Activated T-helper 2 cell treated with anti-CD3 and anti-CD28 coated beads, Interferon-gamma antibody, Interleukin-2, Interleukin-4, amounts not matched to agents 10 μg/mL and 5 μg/mL and 100 μg/mL, durations not matched to agents 14 hours and 24 hours and 36 hours (primary cell): ENCODE measurements at regions of chr19 and their contacts with region 1.

Region 1: GRCh38 chr19:8252922-8253589 is 43.9 kb downstream of the CERS4 start:
- DNase-seq: peak; percentile 73
- H3K4me3 Mint-ChIP-seq: no peak overlapping the region
- H3K27ac Mint-ChIP-seq: no peak overlapping the region
- H3K4me1 Mint-ChIP-seq: peaks cover 3% of the 10 kb centered on the region
- H3K27me3 Mint-ChIP-seq: no peaks in the 10 kb centered on the region

Region 2: GRCh38 chr19:6811906-6812305 is 1441.2 kb before region 1 on chr19:
- intact Hi-C with region 1: no loop called
- DNase-seq: no peak
- H3K4me3 Mint-ChIP-seq: no peak overlapping the region
- H3K27ac Mint-ChIP-seq: no peak overlapping the region
- H3K4me1 Mint-ChIP-seq: peaks cover 37% of the 10 kb centered on the region
- H3K27me3 Mint-ChIP-seq: no peaks in the 10 kb centered on the region

Region 3: GRCh38 chr19:7943444-7944176 is 309.4 kb before region 1 on chr19 and contains the start of gene TIMM44:
- intact Hi-C with region 1: loop called (anchors 10 kb)
- DNase-seq: peak; percentile 99
- H3K4me3 Mint-ChIP-seq: peak within 1 kb of the TSS; percentile 84
- H3K27ac Mint-ChIP-seq: peak within 1 kb of the TSS; percentile 93
- H3K4me1 Mint-ChIP-seq: peaks cover 15% of the 10 kb centered on the region
- H3K27me3 Mint-ChIP-seq: no peaks in the 10 kb centered on the region
- total RNA-seq, gene TIMM44: 79.2 and 90.2 TPM in 2 replicates

Region 4: GRCh38 chr19:8158411-8159074 is 94.5 kb before region 1 on chr19:
- intact Hi-C with region 1: loop called (anchors 1 kb)
- DNase-seq: peak; percentile 36
- H3K4me3 Mint-ChIP-seq: no peak overlapping the region
- H3K27ac Mint-ChIP-seq: no peak overlapping the region
- H3K4me1 Mint-ChIP-seq: peaks cover 9% of the 10 kb centered on the region
- H3K27me3 Mint-ChIP-seq: peaks cover 8% of the 10 kb centered on the region

Region 5: DNA sequence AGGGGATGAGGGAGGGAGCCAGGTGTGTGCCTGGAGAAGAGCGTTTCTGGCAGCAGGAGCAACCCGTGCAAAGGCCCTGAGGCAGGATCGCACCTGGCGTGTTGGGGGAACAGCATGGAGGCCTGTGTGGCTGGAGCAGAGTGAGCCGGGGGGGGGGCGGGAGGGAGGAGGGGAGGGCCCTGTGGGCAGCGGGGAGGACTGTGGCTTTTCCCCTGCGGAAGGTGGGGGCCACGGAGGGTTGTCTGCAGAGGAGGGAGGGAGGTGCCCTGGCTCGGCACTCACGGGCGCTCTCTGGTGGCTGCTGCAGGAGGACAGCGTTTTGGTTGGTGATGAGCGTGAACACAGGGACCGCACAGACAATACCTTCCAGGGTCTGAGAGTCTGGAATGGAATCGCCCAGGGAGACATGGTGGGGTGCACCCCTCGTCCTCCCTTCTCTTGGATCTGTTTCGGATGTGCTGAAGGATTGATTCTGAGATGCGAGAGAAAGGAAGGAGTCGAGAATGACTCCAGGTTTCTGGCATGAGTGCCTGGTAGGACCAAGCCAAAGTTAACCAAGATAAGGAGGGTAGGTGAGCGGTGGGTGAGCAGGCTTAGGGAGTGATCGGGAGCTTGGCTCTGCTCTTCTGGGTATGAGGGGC is 143.6 kb after region 1 on chr19:
- intact Hi-C with region 1: no loop called
- DNase-seq: peak; percentile 69
- H3K4me3 Mint-ChIP-seq: no peak overlapping the region
- H3K27ac Mint-ChIP-seq: peak overlapping the region; percentile 10
- H3K4me1 Mint-ChIP-seq: peaks cover 16% of the 10 kb centered on the region
- H3K27me3 Mint-ChIP-seq: no peaks in the 10 kb centered on the region